PC-9 (cell line): ENCODE measurements at regions of chr7 and their contacts with region 1.

Region 1: DNA sequence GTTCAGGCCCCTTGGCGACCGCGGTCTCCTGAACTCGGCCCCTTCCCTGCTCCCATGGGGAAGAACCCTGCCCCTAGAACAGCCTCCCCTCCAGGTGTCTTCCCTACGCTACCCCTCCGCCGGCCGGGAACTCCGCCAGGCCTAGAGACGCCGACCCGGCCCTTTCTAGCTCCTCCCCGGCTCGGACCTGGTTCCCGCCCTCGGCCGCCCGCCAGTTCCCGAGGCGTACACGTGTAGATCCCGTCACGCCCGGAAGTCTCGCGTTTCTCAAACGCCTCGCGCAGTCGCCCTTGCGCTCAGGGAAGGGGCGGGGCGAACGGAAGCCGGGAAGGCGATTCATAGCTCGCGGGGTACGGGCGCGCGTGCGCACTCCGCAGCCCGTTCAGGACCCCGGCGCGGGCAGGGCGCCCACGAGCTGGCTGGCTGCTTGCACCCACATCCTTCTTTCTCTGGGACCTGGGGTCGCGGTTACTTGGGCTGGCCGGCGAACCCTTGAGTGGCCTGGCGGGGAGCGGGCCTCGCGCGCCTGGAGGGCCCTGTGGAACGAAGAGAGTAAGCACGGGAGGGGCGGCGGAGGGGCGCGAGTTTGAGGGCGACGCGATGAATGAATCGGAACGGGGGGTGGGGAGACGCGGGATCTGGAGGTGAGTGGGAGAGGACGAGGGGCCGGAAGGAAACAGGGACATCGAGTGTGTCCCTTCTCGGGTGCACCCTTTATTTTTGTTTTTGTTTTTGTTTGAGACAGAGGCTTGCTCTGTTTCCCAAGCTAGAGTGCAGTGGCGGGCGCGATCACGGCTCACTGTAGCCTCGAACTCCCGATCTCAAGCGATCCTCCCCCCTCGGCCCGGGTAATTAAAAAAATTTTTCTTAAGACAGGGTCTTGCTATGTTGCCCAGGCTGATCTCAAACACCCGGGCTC is at the start of gene POP7:
- DNase-seq: peak; percentile 91 to 99
- H3K4me3 ChIP-seq: peak within 1 kb of the TSS; percentile 86
- H3K27ac ChIP-seq: peak within 1 kb of the TSS; percentile 43
- H3K4me1 ChIP-seq: peaks cover 12% of the 10 kb centered on the region; the same call in 1 of the 2 replicates
- H3K27me3 ChIP-seq: no peaks in the 10 kb centered on the region
- CTCF ChIP-seq: no peak
- total RNA-seq, gene POP7: 59.4 and 62.7 TPM in 2 replicates

Region 2: GRCh38 chr7:99897322-99898022 is 808.5 kb before region 1 on chr7:
- CTCF ChIA-PET with region 1: no interaction called
- POLR2A ChIA-PET with region 1: no interaction called
- intact Hi-C with region 1: no loop called
- DNase-seq: no peak
- H3K4me3 ChIP-seq: no peak overlapping the region
- H3K27ac ChIP-seq: no peak overlapping the region
- H3K4me1 ChIP-seq: no peaks in the 10 kb centered on the region
- H3K27me3 ChIP-seq: no peaks in the 10 kb centered on the region
- CTCF ChIP-seq: no peak

Region 3: GRCh38 chr7:100428967-100429636 is 276.9 kb before region 1 on chr7:
- CTCF ChIA-PET with region 1: no interaction called
- POLR2A ChIA-PET with region 1: interaction called, 12 read pairs
- intact Hi-C with region 1: no loop called
- DNase-seq: peak; percentile 97 to 100
- H3K4me3 ChIP-seq: peak overlapping the region; percentile 66
- H3K27ac ChIP-seq: peak overlapping the region; percentile 93
- H3K4me1 ChIP-seq: peaks cover 37% of the 10 kb centered on the region
- H3K27me3 ChIP-seq: no peaks in the 10 kb centered on the region
- CTCF ChIP-seq: no peak; the same call in 1 of the 2 replicates

Region 4: DNA sequence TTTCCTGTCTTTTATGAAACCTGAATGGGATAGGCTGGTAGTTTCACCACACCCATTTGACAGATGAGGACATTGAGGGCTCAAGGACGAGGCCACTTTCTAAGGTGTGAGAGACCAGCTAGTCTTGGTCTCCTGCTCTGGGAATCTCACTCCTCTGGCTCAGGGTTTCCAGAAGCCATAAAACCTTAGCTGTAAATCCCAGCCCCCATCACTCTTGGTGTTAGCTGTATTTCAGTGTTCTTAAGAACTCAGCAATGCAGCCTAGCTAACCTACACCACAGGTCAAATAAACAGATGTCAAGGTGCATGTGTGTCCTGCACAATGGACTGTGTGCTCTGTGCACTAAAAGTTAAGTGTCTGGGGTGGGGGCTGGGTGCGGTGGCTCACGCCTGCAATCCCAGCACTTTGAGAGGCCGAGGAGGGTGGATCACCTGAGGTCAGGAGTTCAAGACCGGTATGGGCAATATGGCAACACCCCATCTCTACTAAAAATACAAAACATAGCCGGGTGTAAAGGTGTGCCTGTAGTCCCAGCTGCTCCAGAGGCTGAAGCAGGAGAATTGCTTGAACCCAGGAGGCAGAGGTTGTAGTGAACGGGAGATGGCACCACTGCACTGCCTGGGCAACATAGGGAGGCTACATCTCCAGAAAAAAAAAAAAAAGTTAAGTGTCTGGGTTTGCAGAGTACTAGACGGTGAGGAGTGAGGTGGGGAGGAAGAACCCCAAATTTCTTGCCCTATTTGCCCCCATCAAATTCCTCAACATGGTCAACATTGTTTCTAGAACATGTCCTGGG is 13.7 kb after region 1 on chr7:
- CTCF ChIA-PET with region 1: interaction called, 25 read pairs
- POLR2A ChIA-PET with region 1: interaction called, 4 read pairs
- intact Hi-C with region 1: no loop called
- DNase-seq: peak in 1 of 2 experiments; percentile 50
- H3K4me3 ChIP-seq: no peak overlapping the region
- H3K27ac ChIP-seq: no peak overlapping the region
- H3K4me1 ChIP-seq: peaks cover 11% of the 10 kb centered on the region; the same call in 1 of the 2 replicates
- H3K27me3 ChIP-seq: no peaks in the 10 kb centered on the region
- CTCF ChIP-seq: peak; percentile 50; the same call in 1 of the 2 replicates

Region 5: DNA sequence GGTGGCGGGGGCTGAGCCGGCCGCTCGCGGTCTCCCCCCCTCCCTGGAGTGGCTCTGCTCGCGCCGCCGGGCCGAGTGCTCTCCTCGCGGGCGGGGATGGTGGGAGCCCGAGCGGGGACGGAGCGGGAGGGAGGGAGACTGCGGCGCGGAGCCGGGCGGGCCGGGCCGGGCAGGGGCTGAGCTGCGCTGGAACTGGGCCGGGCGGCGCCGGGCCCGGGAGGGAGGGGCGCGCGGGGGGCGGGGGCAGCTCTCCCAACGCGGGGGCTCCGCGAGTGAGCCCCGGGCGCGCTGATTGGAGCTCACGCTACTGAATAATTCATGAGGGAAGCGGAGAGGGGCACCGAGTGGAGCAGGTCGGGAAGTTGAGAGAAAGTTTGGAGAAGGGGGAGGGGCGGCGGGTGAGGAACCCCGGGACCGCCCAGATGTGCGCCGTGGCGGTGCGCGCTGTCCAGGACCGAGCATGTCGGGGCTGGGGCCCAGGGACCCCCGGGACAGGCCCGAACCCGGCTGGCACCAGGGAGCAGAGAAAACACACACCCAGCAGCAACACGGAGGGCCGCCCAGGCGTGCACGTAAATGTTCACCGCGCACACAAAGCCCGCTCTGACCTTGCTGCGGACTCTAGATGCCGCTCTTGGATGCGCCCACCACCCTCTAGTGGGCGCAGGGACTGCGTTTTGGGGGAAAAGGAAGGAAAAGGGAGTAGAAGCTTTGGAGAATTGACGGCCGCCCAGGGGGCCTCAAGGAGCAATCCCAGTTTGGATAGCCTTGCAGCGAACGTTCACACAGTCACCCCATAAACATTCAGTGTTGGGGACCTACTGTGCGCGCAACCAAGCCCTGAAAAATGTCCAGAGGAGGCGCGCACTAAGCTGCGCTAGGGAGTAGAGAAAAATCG is 121.6 kb after region 1 on chr7 and contains the start of gene EPHB4:
- CTCF ChIA-PET with region 1: interaction called, 12 read pairs
- POLR2A ChIA-PET with region 1: interaction called, 5 read pairs
- intact Hi-C with region 1: loop called (anchors 1 kb)
- DNase-seq: peak in 1 of 2 experiments; percentile 85
- H3K4me3 ChIP-seq: peak within 1 kb of the TSS; percentile 68
- H3K27ac ChIP-seq: no peak within 1 kb of the TSS
- H3K4me1 ChIP-seq: peaks cover 12% of the 10 kb centered on the region; the same call in 1 of the 2 replicates
- H3K27me3 ChIP-seq: no peaks in the 10 kb centered on the region
- CTCF ChIP-seq: no peak; the same call in 1 of the 2 replicates
- total RNA-seq, gene EPHB4: 79.4 and 94.6 TPM in 2 replicates

Region 6: GRCh38 chr7:100889761-100890634 is 184.0 kb after region 1 on chr7:
- CTCF ChIA-PET with region 1: no interaction called
- POLR2A ChIA-PET with region 1: interaction called, 8 read pairs
- intact Hi-C with region 1: loop called (anchors 2 kb)
- DNase-seq: peak; percentile 77 to 96
- H3K4me3 ChIP-seq: peak overlapping the region; percentile 77
- H3K27ac ChIP-seq: peak overlapping the region; percentile 90
- H3K4me1 ChIP-seq: peaks cover 26% of the 10 kb centered on the region
- H3K27me3 ChIP-seq: 0 out of 2 replicates have a peak, but pooled peaks cover under 1% of the 10 kb centered on the region
- CTCF ChIP-seq: no peak

Region 7: DNA sequence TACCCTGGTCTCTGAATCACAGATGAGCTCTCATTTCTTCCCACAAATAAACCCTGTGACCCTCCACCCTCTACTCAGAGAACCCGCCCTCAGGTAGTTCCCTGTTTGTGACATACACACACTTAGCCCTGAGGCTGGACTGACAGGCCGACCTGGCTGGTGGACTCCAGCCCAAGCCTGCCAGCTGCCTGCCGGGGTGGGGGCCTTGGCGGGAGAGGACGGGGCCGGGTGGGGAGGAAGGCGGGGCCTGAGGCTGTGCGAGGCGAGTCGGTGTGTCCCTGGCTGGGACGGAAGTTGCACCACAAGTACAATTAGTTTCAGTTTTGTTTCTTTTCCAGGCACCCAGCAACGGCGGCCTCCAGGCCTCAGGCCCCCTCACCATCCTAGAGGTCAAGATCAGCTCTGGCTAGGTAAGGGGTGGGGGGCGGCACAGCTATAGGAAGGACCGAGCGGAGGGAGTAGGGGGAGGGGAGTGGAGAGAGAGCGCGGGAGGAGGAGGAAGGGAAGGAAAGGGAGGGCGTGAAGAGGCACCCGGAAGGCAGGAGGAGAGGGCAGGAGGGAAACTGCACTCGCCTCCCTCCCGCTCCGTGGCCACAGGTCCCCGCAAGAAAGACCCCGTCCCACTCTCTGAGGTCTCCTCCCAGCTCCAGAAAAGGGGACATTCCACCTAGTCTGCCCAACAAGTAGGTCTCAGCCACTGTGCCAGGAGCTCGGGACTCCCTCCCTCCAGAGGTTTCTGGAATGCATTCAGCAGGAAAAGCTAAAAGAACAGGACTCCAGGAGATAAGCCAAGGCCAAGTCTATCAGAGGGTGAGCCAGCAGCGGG is 379.4 kb after region 1 on chr7 and contains the start of gene TRIM56:
- CTCF ChIA-PET with region 1: interaction called, 4 read pairs
- POLR2A ChIA-PET with region 1: interaction called, 29 read pairs
- intact Hi-C with region 1: no loop called
- DNase-seq: peak; percentile 98 to 99
- H3K4me3 ChIP-seq: peak within 1 kb of the TSS; percentile 88
- H3K27ac ChIP-seq: peak within 1 kb of the TSS; percentile 88
- H3K4me1 ChIP-seq: peaks cover 39% of the 10 kb centered on the region
- H3K27me3 ChIP-seq: no peaks in the 10 kb centered on the region
- CTCF ChIP-seq: no peak
- total RNA-seq, gene TRIM56: 72.3 and 81.6 TPM in 2 replicates